Activated CD4-positive, alpha-beta T cell treated with anti-CD3 and anti-CD28 coated beads for 36 hours (primary cell): ENCODE measurements at regions of chr3 and their contacts with region 1.

Region 1: GRCh38 chr3:50568947-50569749 is at the start of gene HEMK1:
- DNase-seq: peak; percentile 98
- ATAC-seq: peak; percentile 33
- H3K4me3 Mint-ChIP-seq: peak within 1 kb of the TSS; percentile 100
- H3K27ac Mint-ChIP-seq: peak within 1 kb of the TSS; percentile 99
- H3K4me1 Mint-ChIP-seq: peaks cover 59% of the 10 kb centered on the region
- H3K27me3 Mint-ChIP-seq: no peaks in the 10 kb centered on the region
- total RNA-seq, gene HEMK1: 61.6 to 77.7 TPM

Region 2: GRCh38 chr3:50235716-50236496 is 333.2 kb before region 1 on chr3 and contains the start of gene GNAI2:
- CTCF ChIA-PET with region 1: no interaction called
- POLR2A ChIA-PET with region 1: no interaction called
- intact Hi-C with region 1: loop called in 1 of 2 experiments (anchors 2 kb)
- DNase-seq: peak; percentile 99
- ATAC-seq: peak; percentile 92
- H3K4me3 Mint-ChIP-seq: peak within 1 kb of the TSS; percentile 90
- H3K27ac Mint-ChIP-seq: peak within 1 kb of the TSS; percentile 96
- H3K4me1 Mint-ChIP-seq: peaks cover 31% of the 10 kb centered on the region
- H3K27me3 Mint-ChIP-seq: no peaks in the 10 kb centered on the region
- total RNA-seq, gene GNAI2: 280 to 341 TPM

Region 3: DNA sequence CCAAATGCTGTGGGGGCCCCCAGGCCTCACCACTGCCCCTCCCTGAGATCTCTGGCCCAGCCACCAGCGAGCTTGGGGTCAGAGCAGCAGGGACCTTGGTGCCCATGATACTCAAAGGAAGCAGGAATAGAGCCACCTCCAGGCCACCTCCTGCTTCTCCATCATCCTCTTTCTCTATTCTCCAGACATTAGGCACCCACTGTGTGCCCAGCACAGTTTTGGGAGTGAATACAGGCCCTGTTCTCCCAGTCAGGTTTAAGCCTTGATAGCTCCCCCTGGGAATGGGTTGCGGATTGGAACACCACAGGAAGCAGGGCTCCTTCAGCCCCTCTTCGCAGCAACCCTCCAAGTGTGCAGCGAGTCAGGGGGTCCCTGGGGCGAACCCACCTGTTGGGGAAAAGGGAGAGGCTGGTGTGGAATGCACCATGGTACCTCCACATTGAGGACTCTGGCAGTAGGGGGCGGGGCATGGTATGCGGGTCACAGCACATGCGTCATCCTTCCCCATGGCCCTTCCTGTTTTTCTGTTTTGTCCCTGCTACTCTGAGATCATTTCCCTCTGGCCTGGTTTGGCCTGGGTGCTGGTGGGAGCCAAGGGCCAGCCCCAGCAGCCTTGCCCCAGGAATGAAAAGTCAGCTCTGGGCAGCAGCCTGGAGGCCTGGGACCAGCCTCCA is 314.4 kb before region 1 on chr3:
- CTCF ChIA-PET with region 1: no interaction called
- POLR2A ChIA-PET with region 1: no interaction called
- intact Hi-C with region 1: no loop called
- DNase-seq: no peak
- ATAC-seq: no peak
- H3K4me3 Mint-ChIP-seq: no peak overlapping the region
- H3K27ac Mint-ChIP-seq: peak overlapping the region; percentile 19
- H3K4me1 Mint-ChIP-seq: peaks cover 21% of the 10 kb centered on the region
- H3K27me3 Mint-ChIP-seq: no peaks in the 10 kb centered on the region

Region 4: DNA sequence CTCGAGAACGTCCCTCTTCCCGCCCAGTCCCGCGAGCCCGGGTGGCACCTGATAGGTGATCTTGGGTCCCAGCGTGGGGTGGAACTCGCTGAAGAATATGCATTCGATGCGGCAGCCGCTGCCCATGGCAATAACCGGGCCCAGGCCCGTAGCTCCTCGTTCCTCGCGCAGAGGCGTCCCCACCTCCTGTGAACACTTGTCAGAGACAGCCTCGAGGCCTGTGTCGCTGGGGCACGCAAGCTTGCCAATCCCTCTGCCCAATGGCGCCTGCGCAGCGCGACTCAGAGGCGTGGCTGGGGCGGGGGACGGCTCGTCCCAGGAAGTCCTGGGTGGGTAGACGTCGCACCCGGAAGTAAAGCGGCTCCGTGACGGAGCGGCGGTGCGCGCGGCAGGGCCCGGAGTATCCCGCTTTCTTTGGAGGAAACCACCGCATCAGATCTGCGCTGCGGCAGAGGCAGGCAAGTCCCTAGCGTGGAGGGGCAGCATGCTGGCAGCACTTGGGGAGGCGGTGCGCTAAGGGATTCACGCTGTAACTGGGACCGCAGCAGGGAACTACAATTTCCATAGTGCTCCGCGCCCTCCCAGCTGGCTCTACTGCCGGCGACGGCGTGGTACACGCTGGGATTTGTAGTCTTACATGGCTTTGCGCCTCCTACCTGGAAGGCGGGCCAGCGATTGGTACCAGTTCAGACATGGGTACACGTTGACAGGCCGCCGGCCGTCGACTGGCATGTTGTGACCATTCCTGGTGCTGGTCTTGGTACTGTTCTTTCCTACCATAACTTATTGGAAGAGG is 218.4 kb before region 1 on chr3 and contains the starts of genes CYB561D2 and NPRL2:
- CTCF ChIA-PET with region 1: interaction called, 4 read pairs
- POLR2A ChIA-PET with region 1: interaction called, 3 read pairs
- intact Hi-C with region 1: loop called (anchors 1 to 5 kb)
- DNase-seq: peak; percentile 99
- ATAC-seq: peak; percentile 90
- H3K4me3 Mint-ChIP-seq: peak within 1 kb of the TSS; percentile 90
- H3K27ac Mint-ChIP-seq: peak within 1 kb of the TSS; percentile 97
- H3K4me1 Mint-ChIP-seq: peaks cover 55% of the 10 kb centered on the region
- H3K27me3 Mint-ChIP-seq: no peaks in the 10 kb centered on the region
- total RNA-seq, gene CYB561D2: 10.3 to 14.3 TPM
- total RNA-seq, gene NPRL2: 42.5 to 43.0 TPM

Region 5: GRCh38 chr3:50550079-50550741 is 18.9 kb before region 1 on chr3:
- CTCF ChIA-PET with region 1: interaction called, 11 read pairs
- POLR2A ChIA-PET with region 1: no interaction called
- intact Hi-C with region 1: no loop called
- DNase-seq: peak; percentile 83
- ATAC-seq: peak; percentile 78
- H3K4me3 Mint-ChIP-seq: no peak overlapping the region
- H3K27ac Mint-ChIP-seq: no peak overlapping the region
- H3K4me1 Mint-ChIP-seq: no peaks in the 10 kb centered on the region
- H3K27me3 Mint-ChIP-seq: no peaks in the 10 kb centered on the region

Region 6: GRCh38 chr3:50652709-50653108 is 83.6 kb after region 1 on chr3:
- CTCF ChIA-PET with region 1: interaction called, 23 read pairs
- POLR2A ChIA-PET with region 1: no interaction called
- intact Hi-C with region 1: loop called in 1 of 2 experiments (anchors 1 kb)
- DNase-seq: peak; percentile 80
- ATAC-seq: peak; percentile 51
- H3K4me3 Mint-ChIP-seq: no peak overlapping the region
- H3K27ac Mint-ChIP-seq: peak overlapping the region; percentile 7
- H3K4me1 Mint-ChIP-seq: peaks cover 25% of the 10 kb centered on the region
- H3K27me3 Mint-ChIP-seq: no peaks in the 10 kb centered on the region

Region 7: GRCh38 chr3:51384726-51385473 is 815.8 kb after region 1 on chr3 and contains the start of gene MANF:
- CTCF ChIA-PET with region 1: interaction called, 4 read pairs
- POLR2A ChIA-PET with region 1: interaction called, 6 read pairs
- intact Hi-C with region 1: loop called (anchors 1 to 2 kb)
- DNase-seq: peak; percentile 99
- ATAC-seq: peak; percentile 97
- H3K4me3 Mint-ChIP-seq: peak within 1 kb of the TSS; percentile 93
- H3K27ac Mint-ChIP-seq: peak within 1 kb of the TSS; percentile 99
- H3K4me1 Mint-ChIP-seq: peaks cover 46% of the 10 kb centered on the region
- H3K27me3 Mint-ChIP-seq: no peaks in the 10 kb centered on the region
- total RNA-seq, gene MANF: 124 to 129 TPM